ENCODE measurements at regions of chr14 and their contacts with region 1.

Region 1: GRCh38 chr14:58571769-58572472 is 65.8 kb upstream of the DACT1 start:
- DNase-seq: peak; percentile 78
- H3K4me3 Mint-ChIP-seq: peak overlapping the region; percentile 61
- H3K27ac Mint-ChIP-seq: peak overlapping the region; percentile 95
- H3K4me1 Mint-ChIP-seq: peaks cover 55% of the 10 kb centered on the region
- H3K27me3 Mint-ChIP-seq: no peaks in the 10 kb centered on the region

Region 2: DNA sequence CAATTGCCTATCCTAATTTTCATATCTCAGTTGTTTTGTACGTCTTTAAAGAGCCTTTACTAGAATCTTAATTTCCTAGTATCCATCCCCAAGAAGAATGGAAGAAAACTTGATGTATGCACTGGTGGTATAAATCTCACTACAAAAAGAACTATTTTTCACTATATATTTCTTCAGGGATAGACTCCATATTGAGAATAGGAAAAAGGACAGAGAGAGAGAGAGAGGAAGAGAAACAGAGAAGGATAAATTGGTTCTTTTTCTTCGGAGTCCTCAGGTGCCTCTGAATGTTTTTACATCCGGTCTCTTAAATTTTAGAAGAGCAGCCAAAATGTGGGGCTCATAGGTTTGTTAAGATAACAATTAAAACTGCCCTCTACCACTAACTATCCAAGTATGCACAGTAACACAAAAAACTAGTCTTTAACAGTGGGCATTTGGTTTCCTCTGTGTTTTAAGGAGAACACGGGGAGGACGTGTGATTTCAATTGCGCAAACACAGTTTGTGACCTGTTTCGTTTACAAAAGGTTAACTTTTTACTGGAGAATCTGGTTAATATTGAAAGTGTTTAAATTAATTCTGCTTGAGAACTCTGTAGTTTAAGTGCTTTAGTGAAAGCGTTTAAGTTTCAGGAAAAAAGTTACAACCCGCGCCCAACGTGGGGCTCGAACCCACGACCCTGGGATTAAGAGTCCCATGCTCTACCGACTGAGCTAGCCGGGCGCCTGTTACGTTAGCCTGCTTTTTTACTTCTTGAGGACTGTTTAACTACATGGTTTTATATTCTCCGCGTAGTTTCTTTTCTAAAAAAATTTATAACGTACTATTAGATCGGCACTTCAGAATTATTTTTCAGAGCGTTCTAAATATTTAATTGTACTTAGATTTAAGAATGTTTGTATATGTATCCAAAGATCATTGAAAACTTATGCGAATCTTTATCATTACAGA is 332.4 kb before region 1 on chr14:
- CTCF ChIA-PET with region 1: interaction called, 3 read pairs
- intact Hi-C with region 1: loop called (anchors 1 kb)
- DNase-seq: peak; percentile 88
- H3K4me3 Mint-ChIP-seq: no peak overlapping the region
- H3K27ac Mint-ChIP-seq: no peak overlapping the region
- H3K4me1 Mint-ChIP-seq: peaks cover 22% of the 10 kb centered on the region
- H3K27me3 Mint-ChIP-seq: no peaks in the 10 kb centered on the region

Region 3: GRCh38 chr14:58297762-58298476 is 274.0 kb before region 1 on chr14:
- CTCF ChIA-PET with region 1: no interaction called
- intact Hi-C with region 1: loop called (anchors 1 kb)
- DNase-seq: peak; percentile 99
- H3K4me3 Mint-ChIP-seq: no peak overlapping the region
- H3K27ac Mint-ChIP-seq: no peak overlapping the region
- H3K4me1 Mint-ChIP-seq: peaks cover 43% of the 10 kb centered on the region
- H3K27me3 Mint-ChIP-seq: no peaks in the 10 kb centered on the region

Region 4: DNA sequence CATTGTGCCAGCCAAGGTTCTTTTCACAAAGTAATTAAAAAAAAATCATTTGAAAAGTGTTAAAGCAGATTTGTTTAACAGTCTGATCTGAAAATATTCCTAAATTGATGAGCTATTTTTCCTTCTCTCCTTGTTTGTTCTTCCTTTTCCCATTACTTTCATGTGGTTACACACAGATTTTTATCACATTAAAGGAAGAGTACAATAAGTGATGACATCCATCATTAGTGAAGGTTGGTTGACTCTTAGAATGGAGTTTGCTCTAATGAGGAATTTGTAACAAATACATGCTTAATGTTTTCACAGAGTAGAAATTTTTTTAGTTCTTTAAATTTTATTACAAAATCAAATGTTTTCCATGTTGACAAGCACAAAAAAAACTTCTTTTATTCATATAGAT is 195.1 kb before region 1 on chr14:
- CTCF ChIA-PET with region 1: no interaction called
- intact Hi-C with region 1: no loop called
- DNase-seq: no peak
- H3K4me3 Mint-ChIP-seq: no peak overlapping the region
- H3K27ac Mint-ChIP-seq: no peak overlapping the region
- H3K4me1 Mint-ChIP-seq: no peaks in the 10 kb centered on the region
- H3K27me3 Mint-ChIP-seq: no peaks in the 10 kb centered on the region

Region 5: DNA sequence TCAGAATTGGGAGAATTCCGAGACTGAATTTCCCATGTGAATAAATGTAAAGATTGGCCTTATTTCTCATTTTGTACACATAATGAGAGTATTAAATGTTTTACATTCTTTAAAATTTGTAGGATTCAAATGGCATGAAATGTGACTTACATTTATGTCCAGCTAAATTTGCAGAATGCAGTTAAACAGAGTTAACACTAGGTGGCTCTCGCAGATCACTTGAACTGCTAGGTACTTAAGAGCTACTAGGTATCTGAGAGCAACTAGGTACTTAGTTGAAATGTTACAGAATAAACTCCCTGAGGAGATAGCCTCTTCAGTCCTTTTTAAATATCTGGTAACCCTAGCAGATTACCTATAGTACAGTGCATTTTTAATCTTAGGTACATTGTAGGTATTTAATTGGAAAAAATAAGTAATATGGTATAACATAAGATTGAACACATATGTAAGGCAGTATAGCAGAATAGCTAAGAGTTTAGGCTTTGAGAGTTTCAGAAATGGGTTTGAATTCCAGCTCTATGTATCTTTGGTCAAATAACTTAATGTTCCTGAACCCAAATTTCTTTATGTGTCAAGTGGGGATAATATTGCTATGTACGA is 70.6 kb before region 1 on chr14:
- CTCF ChIA-PET with region 1: interaction called, 15 read pairs
- intact Hi-C with region 1: loop called (anchors 1 kb)
- DNase-seq: peak; percentile 52
- H3K4me3 Mint-ChIP-seq: no peak overlapping the region
- H3K27ac Mint-ChIP-seq: no peak overlapping the region
- H3K4me1 Mint-ChIP-seq: no peaks in the 10 kb centered on the region
- H3K27me3 Mint-ChIP-seq: no peaks in the 10 kb centered on the region

Region 6: GRCh38 chr14:58598028-58598803 is 26.3 kb after region 1 on chr14:
- CTCF ChIA-PET with region 1: interaction called, 6 read pairs
- intact Hi-C with region 1: loop called (anchors 1 kb)
- DNase-seq: peak; percentile 39
- H3K4me3 Mint-ChIP-seq: no peak overlapping the region
- H3K27ac Mint-ChIP-seq: no peak overlapping the region
- H3K4me1 Mint-ChIP-seq: peaks cover 43% of the 10 kb centered on the region
- H3K27me3 Mint-ChIP-seq: peaks cover 3% of the 10 kb centered on the region

Region 7: DNA sequence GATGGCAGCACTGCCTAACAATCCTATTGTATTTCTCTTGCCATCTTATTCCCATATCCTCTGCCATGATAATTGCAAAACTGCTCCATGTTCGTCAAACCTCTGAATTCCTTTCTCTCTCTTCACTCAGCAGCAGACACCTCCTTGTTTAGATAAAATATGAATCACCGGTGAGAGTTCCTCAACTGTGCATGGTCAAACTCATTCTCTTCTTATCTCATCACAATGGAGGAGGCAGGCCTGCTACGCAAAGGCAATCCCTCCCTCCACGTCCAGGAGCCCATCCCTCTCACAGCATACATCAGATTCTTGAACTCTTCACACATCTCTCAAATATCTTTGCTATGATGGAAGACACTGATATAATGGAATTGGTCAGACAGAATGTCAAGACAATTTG is 526.5 kb after region 1 on chr14:
- CTCF ChIA-PET with region 1: no interaction called
- intact Hi-C with region 1: no loop called
- DNase-seq: no peak
- H3K4me3 Mint-ChIP-seq: no peak overlapping the region
- H3K27ac Mint-ChIP-seq: no peak overlapping the region
- H3K4me1 Mint-ChIP-seq: no peaks in the 10 kb centered on the region
- H3K27me3 Mint-ChIP-seq: peaks cover 11% of the 10 kb centered on the region

Region 8: GRCh38 chr14:59175404-59175803 is 603.5 kb after region 1 on chr14:
- CTCF ChIA-PET with region 1: no interaction called
- intact Hi-C with region 1: no loop called
- DNase-seq: no peak
- H3K4me3 Mint-ChIP-seq: no peak overlapping the region
- H3K27ac Mint-ChIP-seq: no peak overlapping the region
- H3K4me1 Mint-ChIP-seq: no peaks in the 10 kb centered on the region
- H3K27me3 Mint-ChIP-seq: no peaks in the 10 kb centered on the region